Left cardiac atrium (tissue), 4 donors: ENCODE measurements at regions of chr10 and their contacts with region 1.

Region 1: DNA sequence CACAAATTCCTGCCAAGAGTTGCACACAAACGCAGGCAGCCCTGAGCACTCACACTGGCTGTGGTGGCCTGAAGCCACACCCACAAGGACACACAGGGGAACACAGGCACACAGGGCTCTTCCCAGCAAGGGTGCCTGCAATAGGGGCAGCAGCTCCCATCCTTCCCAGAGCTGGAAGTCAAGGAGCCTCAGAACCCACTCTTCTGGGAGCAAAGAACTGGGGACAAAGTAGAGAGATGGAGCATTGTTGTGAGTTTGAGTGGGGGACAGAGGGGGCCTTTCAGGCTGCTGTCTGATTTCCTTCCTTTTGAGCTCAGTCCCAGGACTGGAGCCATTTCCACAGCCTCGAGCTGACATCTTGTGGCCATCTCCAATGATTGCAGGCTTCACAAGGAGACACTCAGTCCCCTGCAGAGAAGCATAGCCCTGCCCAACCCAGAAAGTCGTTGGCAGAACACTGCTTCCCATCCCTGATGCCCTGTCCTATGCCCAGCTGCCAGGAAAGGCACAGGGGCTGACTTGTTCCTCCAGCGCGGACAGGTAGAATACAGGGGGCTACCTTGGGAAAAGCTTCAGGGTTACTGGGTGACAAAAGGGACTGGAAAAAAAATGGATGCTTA is 34.4 kb upstream of the SLF2 start:
- DNase-seq: peak; percentile 47
- ATAC-seq: peak; percentile 81 to 82

Region 2: DNA sequence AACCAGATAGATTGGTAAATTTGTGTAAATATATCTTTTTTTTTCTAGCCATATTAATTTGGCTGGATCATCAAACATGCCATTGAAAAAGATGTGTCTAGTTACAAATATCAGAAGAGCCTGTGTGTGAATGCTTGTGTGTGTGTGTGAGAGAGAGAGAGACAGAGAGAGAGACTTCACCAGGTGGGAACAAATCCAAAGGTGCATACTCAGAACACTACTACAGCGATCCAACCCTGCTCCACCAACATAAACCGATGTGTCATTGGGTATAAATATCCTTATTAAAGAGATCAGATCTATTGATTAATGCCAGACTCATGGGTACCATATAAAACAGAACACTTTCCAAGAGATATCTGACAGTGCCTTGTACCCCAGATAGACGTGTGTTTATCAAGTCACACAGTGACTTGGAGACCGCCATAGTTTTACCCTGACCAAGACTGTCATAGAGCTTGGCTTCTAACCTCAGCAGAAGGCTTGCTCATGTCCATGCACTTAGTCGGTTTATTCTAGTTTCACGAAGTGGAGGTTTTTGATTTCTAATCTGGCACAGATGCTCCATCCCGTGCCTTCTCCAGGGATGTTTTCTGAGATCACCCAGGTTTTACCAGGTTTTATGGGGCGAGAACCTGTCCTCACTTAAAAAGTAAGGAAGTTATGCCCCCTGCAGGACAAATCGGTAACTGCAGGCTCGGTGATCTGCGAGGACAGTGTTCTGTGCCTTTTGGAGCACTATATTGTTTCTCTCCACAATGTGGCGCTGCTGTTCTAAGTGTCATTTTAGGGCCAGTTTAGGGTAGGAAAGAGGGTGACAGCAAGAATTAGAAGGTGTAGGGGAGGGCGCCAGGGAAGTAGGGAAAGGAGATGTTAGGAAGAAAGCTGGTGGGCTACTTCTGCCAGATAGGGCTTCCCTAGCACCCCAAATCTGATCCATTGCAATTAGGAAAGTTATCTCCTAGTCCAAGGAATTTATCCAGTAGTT is 444.9 kb before region 1 on chr10:
- intact Hi-C with region 1: loop called in 1 of 2 experiments (anchors 5 kb)
- DNase-seq: peak; percentile 91
- ATAC-seq: peak; percentile 92 to 96

Region 3: DNA sequence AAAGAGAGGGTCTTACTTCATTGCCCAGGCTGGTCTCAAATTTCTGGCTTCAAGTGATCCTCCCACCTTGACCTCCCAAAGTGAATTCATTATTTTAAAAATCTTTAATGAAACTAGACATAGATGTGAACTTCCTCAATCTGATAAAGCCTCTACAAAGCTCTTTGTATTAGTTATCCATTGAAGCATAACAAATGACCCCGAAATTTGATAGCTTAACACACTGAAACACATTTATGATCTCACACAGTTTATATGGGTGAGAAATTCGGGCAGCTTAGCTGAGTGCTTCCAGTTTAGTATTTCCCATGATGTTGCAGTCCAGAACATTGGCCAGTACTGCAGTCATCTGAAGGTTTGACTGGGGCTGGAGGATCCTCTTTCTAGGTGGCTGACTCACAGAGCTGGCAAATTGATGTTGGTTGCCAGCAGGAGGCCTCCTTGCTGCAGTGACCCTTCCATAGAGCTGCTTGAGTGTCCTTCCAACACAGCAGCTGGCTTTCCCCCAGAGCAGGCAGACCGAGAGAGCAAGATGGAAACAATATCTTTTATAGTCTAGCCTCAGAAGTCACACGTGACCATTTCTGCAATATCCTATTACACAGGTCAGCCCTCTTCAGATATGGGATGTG is 432.2 kb before region 1 on chr10:
- intact Hi-C with region 1: loop called in 1 of 2 experiments (anchors 10 kb)
- DNase-seq: no peak
- ATAC-seq: no peak

Region 4: DNA sequence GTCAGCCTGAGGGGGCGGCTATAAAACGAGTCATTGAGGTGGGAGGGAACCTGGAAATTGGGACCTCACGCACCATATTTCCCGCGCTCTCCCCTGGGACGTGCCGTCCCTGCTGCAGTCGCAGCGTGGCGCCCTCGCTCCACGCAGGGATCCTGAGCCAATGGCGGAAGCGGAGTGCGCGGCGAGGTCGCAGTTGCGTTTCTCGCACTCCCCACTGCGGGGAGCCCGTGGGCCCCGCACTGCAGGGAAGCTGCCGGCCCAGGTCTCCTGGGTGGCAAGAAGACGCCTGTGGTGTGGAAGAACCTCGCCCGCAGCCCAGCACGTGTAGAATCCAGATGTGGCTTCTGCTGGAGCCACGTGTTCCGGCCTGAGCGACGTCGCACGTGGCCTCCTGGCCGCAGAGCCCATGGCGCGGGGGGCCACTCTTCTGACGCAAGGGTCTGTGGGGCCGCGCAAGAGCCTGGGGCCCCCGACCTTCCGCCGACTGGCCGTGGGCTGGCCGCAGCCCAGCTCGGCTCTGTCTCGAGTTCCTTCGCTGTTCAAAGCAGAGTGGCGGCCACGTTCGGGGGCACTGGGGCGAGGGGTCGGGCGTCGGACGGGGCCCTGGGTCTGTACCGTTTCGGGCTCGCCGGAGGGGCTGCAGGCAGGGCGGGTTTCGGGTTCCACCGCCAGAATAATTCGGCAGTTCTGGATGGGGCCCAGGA is 316.2 kb before region 1 on chr10:
- intact Hi-C with region 1: loop called (anchors 2 to 10 kb)
- DNase-seq: peak; percentile 67
- ATAC-seq: peak; percentile 78 to 80

Region 5: GRCh38 chr10:100728928-100729861 is 149.2 kb before region 1 on chr10:
- intact Hi-C with region 1: no loop called
- DNase-seq: no peak
- ATAC-seq: peak in 1 of 2 donors; percentile 35

Region 6: DNA sequence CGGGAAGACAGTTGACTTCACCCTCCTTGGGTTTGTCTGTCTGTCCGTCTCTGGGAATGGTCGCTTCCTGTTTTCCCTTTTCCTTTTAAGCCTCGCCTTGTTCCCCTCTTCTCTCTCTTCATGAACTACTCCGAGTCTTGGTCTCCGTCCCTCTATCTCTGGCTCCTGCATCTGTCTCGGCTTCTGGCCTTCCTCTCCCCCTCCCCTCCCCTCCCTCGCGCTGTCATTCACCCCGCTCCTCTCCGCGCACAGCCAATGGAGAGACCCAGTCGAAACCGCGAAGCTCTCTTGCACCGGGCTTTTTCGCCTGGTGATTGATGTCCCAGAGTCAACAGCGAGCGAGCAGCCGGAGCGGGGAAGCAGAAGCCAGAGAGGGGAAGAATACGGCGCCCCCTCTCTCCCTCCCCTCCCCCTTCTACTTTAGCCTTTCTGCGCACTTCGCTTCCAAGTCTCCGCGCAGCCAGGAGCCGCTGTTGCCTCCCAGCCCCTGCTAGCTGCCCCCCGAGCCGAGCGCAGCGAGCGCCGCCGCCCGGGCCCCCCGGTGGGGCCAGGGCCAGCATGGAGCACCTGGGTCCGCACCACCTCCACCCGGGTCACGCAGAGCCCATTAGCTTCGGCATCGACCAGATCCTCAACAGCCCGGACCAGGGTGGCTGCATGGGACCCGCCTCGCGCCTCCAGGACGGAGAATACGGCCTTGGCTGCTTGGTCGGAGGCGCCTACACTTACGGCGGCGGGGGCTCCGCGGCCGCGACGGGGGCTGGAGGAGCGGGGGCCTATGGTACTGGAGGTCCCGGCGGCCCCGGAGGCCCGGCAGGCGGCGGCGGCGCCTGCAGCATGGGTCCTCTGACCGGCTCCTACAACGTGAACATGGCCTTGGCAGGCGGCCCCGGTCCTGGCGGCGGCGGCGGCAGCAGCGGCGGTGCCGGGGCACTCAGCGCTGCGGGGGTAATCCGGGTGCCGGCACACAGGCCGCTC is 252.9 kb after region 1 on chr10 and contains the start of gene TLX1:
- intact Hi-C with region 1: no loop called
- DNase-seq: no peak
- ATAC-seq: peak; percentile 44 to 60
- total RNA-seq, gene TLX1: 0.21 TPM in 1 of 2 donors, not detected in the other

Region 7: GRCh38 chr10:101258179-101258885 is 379.9 kb after region 1 on chr10:
- intact Hi-C with region 1: no loop called
- DNase-seq: no peak
- ATAC-seq: no peak